AG04450 (cell line): ENCODE measurements at regions of chr9 and their contacts with region 1.

Region 1: DNA sequence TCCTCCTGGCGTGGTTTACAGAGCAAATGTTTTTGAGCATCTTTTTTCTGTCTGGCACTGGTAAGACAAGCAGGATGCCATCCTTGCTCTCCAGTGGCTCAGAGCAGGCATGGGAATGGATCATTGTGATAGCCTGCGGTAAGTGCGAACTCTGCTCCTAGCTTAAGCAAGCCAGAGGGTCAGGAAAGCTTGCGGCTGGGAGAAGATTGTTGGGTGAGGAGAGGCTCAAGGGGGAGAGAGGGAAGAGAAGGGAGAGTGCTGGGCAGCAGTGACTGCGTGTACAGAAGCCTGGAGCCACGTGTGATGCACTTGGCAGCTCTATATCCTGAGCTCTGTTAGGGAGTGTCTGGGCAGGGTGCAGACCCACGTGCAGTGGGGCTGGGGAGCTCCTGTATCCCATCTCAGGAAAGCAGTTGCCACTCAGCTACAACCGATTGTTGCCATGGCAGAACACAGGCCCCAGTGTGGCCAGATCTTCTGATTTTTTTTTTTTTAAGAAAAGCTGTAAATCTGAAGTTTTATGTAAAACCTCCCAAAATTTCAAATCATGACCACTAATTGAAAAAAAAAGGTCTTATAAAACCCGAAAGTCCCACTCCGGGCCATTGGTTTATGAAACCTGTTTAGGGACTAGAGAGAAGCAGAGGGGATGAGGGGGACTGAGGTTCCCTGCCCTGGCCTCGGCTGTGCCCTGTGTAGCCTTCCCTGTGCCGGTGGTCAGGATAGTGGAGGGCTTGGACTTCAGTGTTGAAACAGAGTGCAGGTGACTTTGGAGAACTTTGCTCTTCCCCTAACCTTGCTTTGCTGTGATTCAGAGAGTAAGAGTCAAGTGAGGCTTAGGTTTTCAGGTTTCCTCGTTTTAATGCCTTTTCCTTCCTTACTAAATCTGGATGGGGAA is 67.3 kb downstream of the ZNF618 start:
- DNase-seq: no peak
- H3K4me3 ChIP-seq: no peak overlapping the region
- H3K27ac ChIP-seq: no peak overlapping the region
- H3K27me3 ChIP-seq: no peaks in the 10 kb centered on the region
- CTCF ChIP-seq: no peak

Region 2: GRCh38 chr9:113929634-113930389 is 13.5 kb before region 1 on chr9:
- CTCF ChIA-PET with region 1: no interaction called
- POLR2A ChIA-PET with region 1: no interaction called
- DNase-seq: no peak
- H3K4me3 ChIP-seq: no peak overlapping the region
- H3K27ac ChIP-seq: peak overlapping the region; percentile 52
- H3K27me3 ChIP-seq: no peaks in the 10 kb centered on the region
- CTCF ChIP-seq: no peak

Region 3: GRCh38 chr9:113963017-113963620 is 19.8 kb after region 1 on chr9:
- CTCF ChIA-PET with region 1: interaction called, 17 read pairs
- POLR2A ChIA-PET with region 1: no interaction called
- DNase-seq: no peak
- H3K4me3 ChIP-seq: no peak overlapping the region
- H3K27ac ChIP-seq: no peak overlapping the region
- H3K27me3 ChIP-seq: no peaks in the 10 kb centered on the region
- CTCF ChIP-seq: peak; percentile 69